Heart right ventricle (tissue), 16 donors: ENCODE measurements at regions of chr12 and their contacts with region 1.

Region 1: GRCh38 chr12:6873094-6874014 is at the start of gene SPSB2:
- DNase-seq: peak; percentile 97 to 99
- ATAC-seq: peak; percentile 90 to 97 (median 94)
- H3K4me3 ChIP-seq: peak within 1 kb of the TSS; percentile 66 to 95 (median 80)
- H3K27ac ChIP-seq: peak within 1 kb of the TSS; percentile 50 to 91 (median 89)
- H3K4me1 ChIP-seq: peaks cover 24 to 58% (median 45%) of the 10 kb centered on the region in 9 donors
- H3K27me3 ChIP-seq: no peaks in the 10 kb centered on the region
- CTCF ChIP-seq: peak in 2 of 9 donors; percentile 9 to 21
- total RNA-seq, gene SPSB2: 2.0 to 5.6 (median 3.4) TPM

Region 2: GRCh38 chr12:6554168-6555017 is 319.0 kb before region 1 on chr12:
- intact Hi-C with region 1: no loop called
- DNase-seq: peak; percentile 77 to 83
- ATAC-seq: peak; percentile 30 to 57 (median 43)
- H3K4me3 ChIP-seq: peak overlapping the region; percentile 66 to 98 (median 94)
- H3K27ac ChIP-seq: peak overlapping the region; percentile 53 to 98 (median 92)
- H3K4me1 ChIP-seq: peaks cover 40 to 79% (median 70%) of the 10 kb centered on the region in 9 donors
- H3K27me3 ChIP-seq: no peaks in the 10 kb centered on the region
- CTCF ChIP-seq: peak; percentile 40 to 81 (median 69)

Region 3: DNA sequence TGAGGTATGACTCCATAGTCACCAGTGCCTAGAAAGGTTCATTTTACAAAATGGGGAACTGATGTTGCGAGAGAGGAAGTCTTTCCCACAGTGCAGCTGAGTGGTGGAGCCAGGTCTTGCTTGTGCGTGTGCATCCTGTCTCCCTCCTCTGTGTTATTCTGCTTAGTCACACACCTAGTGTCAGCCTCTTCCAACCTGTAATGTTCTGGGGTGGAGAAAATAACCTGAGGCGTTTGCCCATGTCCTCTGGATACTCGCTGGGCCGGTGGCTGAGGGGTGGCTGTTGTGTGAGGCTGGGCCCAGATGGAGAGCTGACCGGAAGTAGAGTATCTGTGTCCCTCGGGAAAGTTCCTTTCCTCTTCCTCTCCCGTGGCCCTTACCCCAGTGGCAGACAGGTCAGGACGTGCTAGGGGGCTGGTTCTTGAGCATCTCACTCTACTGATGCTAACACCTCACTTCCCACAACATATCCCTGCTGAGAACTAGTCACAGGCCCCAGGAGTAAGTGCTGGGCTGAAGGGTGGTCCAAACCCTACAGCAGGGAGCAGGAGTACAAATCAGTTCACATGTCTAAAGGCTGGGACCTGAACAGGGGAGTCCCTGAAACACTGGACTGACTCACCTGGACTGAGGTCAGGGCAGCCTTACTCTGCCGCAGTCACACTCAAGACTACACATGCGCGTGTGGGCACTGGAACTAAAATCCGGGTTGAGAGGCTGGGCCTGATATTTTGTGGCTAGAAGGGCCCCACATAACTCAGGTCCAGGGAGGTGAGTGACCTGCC is 127.4 kb before region 1 on chr12:
- intact Hi-C with region 1: no loop called
- DNase-seq: no peak
- ATAC-seq: peak; percentile 32 to 60 (median 46)
- H3K4me3 ChIP-seq: no peak overlapping the region
- H3K27ac ChIP-seq: peak overlapping the region in 8 of 10 donors; percentile 27 to 86 (median 50)
- H3K4me1 ChIP-seq: peaks cover 0 to 18% (median 8%) of the 10 kb centered on the region in 9 donors
- H3K27me3 ChIP-seq: no peaks in the 10 kb centered on the region
- CTCF ChIP-seq: no peak

Region 4: GRCh38 chr12:6890789-6891645 is 17.7 kb after region 1 on chr12:
- intact Hi-C with region 1: loop called in 2 of 10 experiments (anchors 2 kb)
- DNase-seq: peak; percentile 98 to 99
- ATAC-seq: peak; percentile 97 to 99 (median 98)
- H3K4me3 ChIP-seq: peak overlapping the region; percentile 15 to 63 (median 53)
- H3K27ac ChIP-seq: peak overlapping the region; percentile 73 to 94 (median 90)
- H3K4me1 ChIP-seq: peaks cover 0 to 22% (median 11%) of the 10 kb centered on the region in 9 donors
- H3K27me3 ChIP-seq: no peaks in the 10 kb centered on the region
- CTCF ChIP-seq: peak; percentile 81 to 99 (median 95)

Region 5: DNA sequence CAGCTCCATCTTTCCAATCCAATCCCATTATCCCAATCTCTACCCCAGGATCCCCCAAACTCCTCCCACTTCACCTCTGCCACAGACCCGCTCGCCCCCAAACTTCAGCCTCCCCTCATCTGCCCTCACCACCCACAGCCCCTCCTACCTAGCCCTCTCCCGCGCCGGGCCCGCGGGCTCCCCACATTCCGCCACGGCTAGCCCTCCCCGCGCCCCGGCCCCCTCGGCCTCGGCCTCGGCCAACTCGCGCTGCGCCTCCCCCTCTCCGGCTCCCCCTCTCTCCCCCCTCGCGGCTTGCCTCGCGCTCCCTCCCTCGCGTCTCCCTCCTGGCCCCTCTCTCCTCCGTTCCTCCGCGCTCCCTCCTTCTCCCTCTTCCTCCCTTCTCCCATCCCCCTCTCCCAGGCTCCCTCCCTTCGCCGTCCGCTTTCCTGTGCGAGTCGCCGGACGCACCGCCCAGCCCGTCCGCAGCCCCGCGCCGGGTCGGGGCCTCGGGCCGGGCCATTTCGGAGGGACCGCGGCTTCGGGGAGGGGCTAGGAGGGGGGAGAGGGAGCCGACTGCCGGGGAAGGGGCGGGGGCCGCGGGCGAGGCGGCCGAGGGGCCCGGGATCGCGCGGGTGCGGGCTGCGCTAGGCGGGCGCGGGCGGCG is 54.1 kb after region 1 on chr12 and contains the start of gene ATN1:
- intact Hi-C with region 1: loop called in 1 of 10 experiments (anchors 5 kb)
- DNase-seq: peak; percentile 86 to 91
- ATAC-seq: peak; percentile 31 to 69 (median 52)
- H3K4me3 ChIP-seq: peak within 1 kb of the TSS; percentile 69 to 97 (median 88)
- H3K27ac ChIP-seq: peak within 1 kb of the TSS; percentile 74 to 98 (median 96)
- H3K4me1 ChIP-seq: peaks cover 25 to 81% (median 65%) of the 10 kb centered on the region in 9 donors
- H3K27me3 ChIP-seq: peaks cover 0 to 5% (median 0%) of the 10 kb centered on the region in 7 donors
- CTCF ChIP-seq: no peak
- total RNA-seq, gene ATN1: 54.7 to 96.7 (median 65.8) TPM